AG04450 (cell line): ENCODE measurements at regions of chr5 and their contacts with region 1.

Region 1: GRCh38 chr5:177194274-177194673 is 60.7 kb downstream of the NSD1 start:
- DNase-seq: peak; percentile 66
- H3K4me3 ChIP-seq: no peak overlapping the region
- H3K27ac ChIP-seq: peak overlapping the region; percentile 39
- H3K27me3 ChIP-seq: no peaks in the 10 kb centered on the region
- CTCF ChIP-seq: no peak

Region 2: DNA sequence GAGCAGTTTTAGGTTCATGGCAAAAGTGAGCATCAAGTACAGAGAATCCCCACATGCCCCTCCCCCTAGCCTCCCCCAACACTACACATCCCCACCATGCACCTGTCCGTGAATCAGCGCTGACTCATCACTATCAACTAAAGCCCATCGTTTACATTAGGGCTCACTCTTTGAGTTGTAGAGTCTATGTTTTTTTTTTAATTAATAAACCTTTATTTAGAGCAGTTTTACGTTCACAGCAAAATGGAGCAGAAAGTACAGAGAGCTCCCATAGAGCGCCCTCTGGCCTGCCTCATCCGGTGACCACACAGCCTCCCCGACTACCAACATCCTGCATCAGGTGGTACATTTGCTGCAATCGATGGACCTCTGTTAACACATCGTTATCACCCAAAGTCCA is 431.8 kb before region 1 on chr5:
- CTCF ChIA-PET with region 1: no interaction called
- POLR2A ChIA-PET with region 1: no interaction called
- DNase-seq: no peak
- H3K4me3 ChIP-seq: no peak overlapping the region
- H3K27ac ChIP-seq: no peak overlapping the region
- H3K27me3 ChIP-seq: peaks cover 8% of the 10 kb centered on the region
- CTCF ChIP-seq: no peak

Region 3: DNA sequence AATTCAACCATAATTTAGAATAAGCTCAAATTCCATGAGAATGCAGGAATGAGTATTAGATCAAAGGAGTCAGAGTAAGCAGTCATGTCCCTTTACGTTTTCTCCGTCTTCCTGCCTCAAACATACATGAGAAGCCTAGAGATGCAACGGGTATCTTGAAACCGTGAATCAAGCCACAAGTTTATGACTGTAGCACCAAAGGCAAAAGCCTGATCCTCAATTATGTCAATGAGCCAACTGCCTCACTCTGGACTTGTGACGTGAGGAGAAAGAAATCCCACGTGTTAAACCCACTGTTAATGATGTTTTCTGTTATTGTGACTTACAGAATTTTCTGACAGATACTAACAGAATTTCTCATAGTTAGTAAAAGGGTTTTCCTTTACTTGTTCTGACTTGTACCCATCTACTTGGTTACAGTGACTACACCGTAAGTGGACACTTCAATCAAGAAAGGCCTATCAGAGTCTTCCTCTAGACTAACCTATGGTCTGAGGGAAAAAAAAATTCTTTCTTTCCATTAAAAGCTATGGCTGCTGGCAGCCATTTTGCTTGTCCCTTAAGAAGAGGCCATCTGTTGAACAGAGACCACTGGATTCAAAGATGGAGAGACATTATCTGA is 259.9 kb before region 1 on chr5:
- CTCF ChIA-PET with region 1: no interaction called
- POLR2A ChIA-PET with region 1: no interaction called
- DNase-seq: no peak
- H3K4me3 ChIP-seq: no peak overlapping the region
- H3K27ac ChIP-seq: no peak overlapping the region
- H3K27me3 ChIP-seq: no peaks in the 10 kb centered on the region
- CTCF ChIP-seq: no peak

Region 4: DNA sequence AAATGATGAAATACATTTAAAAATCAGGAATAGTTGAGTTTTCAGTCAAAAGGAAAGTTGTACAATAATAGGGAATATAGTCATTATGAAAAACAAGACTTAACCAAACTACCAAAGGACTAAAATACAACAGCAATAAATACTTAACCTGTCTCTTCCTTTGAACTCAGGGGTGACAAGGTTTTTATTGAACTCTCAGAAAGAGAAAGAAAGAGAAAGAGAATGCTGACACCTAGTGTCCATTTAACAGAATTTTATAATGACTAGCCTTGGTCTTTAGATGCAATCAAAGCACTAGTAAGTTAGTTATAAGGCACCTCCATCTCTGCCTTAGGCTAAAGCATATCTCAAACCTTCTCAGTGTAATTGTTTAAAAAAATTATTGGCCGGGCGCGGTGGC is 235.2 kb before region 1 on chr5:
- CTCF ChIA-PET with region 1: no interaction called
- POLR2A ChIA-PET with region 1: interaction called, 11 read pairs
- DNase-seq: no peak
- H3K4me3 ChIP-seq: no peak overlapping the region
- H3K27ac ChIP-seq: no peak overlapping the region
- H3K27me3 ChIP-seq: no peaks in the 10 kb centered on the region
- CTCF ChIP-seq: peak; percentile 49

Region 5: GRCh38 chr5:177067503-177067902 is 126.8 kb before region 1 on chr5:
- CTCF ChIA-PET with region 1: no interaction called
- POLR2A ChIA-PET with region 1: no interaction called
- DNase-seq: no peak
- H3K4me3 ChIP-seq: no peak overlapping the region
- H3K27ac ChIP-seq: no peak overlapping the region
- H3K27me3 ChIP-seq: no peaks in the 10 kb centered on the region
- CTCF ChIP-seq: no peak

Region 6: GRCh38 chr5:177133091-177133852 is 61.0 kb before region 1 on chr5 and contains the start of gene NSD1:
- CTCF ChIA-PET with region 1: no interaction called
- POLR2A ChIA-PET with region 1: no interaction called
- DNase-seq: no peak
- H3K4me3 ChIP-seq: peak within 1 kb of the TSS; percentile 64
- H3K27ac ChIP-seq: peak within 1 kb of the TSS; percentile 21
- H3K27me3 ChIP-seq: no peaks in the 10 kb centered on the region
- CTCF ChIP-seq: no peak
- polyA plus RNA-seq, gene NSD1: 25.6 and 33.4 TPM in 2 replicates

Region 7: GRCh38 chr5:177233802-177234201 is 39.5 kb after region 1 on chr5:
- CTCF ChIA-PET with region 1: no interaction called
- POLR2A ChIA-PET with region 1: interaction called, 12 read pairs
- DNase-seq: no peak
- H3K4me3 ChIP-seq: no peak overlapping the region
- H3K27ac ChIP-seq: no peak overlapping the region
- H3K27me3 ChIP-seq: no peaks in the 10 kb centered on the region
- CTCF ChIP-seq: no peak